ENCODE measurements at regions of chr12 and their contacts with region 1.

Region 1: DNA sequence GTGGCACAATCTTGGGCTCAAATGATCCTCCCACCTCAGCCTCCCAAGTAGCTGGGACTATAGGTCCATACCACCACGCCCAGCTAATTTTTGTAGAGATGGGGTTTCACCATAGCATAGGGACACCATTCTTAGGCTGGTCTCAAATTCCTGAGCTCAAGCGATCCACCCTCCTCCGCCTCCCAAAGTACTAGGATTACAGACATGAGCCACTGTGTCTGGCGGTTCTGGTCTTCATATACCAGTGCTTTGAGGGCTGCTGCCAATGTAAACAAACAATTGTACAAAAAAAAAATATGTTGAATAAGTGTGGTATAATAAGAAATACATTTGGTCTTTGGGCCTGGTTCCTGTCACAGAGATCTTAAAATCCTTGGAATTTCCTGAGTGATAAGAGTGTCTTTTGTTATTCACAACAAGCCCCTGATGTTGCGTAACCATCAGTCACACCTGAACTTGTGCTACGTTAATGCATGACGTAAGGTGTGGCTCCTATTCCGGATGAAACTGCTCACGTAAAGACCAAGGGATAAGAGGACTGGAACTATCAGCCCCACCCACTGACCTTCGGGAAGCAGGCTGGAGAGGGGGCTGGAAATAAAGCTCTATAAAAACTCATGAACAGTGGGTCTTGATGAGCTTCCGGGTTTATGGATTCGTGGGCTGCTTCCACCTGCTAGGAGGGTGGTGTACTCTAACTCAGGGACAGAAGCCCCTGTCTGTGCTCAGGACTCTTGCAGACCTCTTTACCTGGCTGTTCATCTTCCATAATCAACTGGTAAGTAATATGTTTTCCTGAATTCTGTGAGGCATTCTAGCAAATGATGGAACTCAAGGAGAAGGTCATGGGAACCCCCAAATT is 16.5 kb upstream of the RIMKLB start:
- DNase-seq: no peak
- ATAC-seq: no peak

Region 2: DNA sequence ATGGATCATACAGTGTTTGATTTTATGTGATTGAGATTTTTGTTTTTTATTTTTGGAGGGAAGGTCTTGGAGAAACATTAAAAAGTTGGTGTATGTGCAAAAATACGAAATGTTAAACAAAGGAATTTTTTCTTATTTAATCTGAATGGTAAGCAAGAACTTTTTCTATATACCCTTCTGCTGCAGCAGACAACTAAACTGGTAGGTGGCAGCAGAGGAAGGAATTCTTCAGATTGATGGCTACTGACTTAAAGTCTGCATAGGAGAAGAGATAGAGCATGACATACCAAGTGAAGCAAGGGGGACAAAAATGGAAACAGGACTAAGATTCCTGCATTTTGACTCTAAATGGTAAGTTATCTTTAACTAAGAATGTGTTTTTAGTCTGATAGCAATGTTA is 99.1 kb after region 1 on chr12:
- intact Hi-C with region 1: loop called (anchors 5 kb)
- DNase-seq: no peak
- ATAC-seq: peak; percentile 54

Region 3: DNA sequence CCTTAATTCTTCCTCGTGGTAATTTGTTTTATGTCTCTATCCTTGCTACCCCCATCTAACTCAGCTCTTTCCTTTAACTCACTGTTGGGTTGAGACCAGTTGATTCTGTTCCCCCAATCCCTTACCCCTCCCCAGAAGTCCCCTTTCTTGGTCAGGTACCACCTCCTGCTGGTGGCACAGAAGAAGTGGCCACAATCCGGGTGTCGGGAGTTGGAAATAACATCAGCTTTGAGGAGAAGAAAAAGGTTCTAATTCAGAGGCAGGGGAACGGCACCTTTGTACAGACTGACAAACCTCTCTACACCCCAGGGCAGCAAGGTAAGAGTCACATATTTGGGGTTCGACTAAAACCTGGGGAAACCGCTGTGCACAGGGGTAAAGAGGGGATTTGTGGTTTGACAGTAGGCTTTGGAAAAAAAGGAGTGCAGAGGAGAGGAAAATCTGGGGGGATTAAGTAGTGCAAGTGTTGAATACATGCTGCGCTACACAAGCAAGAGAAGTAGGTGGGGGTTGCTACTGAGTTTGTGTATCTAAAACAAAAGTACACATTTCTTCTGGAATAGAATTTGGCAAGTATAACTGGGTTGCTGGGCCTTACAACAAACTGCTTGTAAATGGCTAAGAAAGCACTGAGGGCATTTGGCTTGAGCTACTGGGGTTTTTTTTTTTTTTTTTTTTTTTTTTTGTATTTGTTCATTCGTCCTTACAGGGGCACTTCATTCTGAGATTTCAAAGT is 142.5 kb after region 1 on chr12:
- intact Hi-C with region 1: loop called (anchors 2 kb)
- DNase-seq: no peak
- ATAC-seq: no peak

Region 4: DNA sequence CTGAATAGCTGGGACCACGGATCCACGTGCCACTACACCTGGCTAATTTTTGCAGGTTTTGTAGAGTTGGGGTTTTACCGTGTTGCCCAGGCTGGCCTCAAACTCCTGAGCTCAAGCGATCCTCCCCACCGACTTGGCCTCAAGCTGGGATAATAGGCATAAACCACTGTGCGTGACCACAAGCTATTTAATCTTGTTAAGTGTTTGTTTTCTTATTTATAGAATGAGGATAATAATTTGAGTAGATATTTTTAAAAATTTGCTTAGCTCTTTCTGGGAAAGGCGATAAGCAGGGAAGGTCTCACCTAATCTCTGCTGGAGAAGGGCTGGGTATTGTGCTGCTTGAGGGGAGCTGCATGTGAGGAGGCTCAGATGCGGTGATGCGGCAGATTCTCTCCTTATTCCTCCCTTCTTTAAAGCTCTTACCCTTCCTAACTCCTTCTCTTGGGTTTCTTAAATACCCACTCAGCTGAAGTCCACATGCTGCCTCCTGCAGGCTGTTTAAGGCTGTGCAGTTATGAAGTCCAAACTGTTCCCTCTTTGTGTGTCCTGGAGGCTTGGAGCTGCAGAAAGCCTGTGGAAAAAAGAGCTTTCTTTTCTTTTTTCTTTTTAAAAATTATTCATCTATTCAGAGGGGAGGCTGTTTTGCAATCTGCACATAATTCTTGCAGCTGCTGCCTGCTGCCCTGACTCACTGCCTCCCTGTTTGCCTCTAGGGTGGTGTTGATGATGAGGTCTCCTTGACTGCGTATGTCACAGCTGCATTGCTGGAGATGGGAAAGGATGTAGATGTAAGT is 179.1 kb after region 1 on chr12:
- intact Hi-C with region 1: loop called (anchors 2 kb)
- DNase-seq: no peak
- ATAC-seq: peak; percentile 54

Region 5: DNA sequence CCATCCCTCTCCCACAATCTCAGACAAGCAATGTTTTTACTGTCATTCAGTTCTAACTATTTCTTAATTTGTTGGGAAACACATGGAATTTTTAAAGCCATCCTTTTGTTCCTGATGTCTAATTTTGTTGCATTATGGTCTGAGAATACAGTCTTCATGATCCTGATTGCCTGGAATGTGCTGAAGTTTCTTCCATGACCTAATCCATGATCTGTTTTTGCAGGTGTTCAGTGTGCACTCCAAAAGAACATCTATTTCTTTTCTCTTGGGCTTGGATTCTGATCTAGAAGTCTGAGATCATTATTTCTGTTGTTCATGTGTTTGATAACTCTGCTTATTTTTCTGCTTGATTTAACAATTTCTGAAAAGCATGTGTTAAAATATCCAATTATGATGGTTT is 189.8 kb after region 1 on chr12:
- intact Hi-C with region 1: no loop called
- DNase-seq: no peak
- ATAC-seq: no peak

Region 6: DNA sequence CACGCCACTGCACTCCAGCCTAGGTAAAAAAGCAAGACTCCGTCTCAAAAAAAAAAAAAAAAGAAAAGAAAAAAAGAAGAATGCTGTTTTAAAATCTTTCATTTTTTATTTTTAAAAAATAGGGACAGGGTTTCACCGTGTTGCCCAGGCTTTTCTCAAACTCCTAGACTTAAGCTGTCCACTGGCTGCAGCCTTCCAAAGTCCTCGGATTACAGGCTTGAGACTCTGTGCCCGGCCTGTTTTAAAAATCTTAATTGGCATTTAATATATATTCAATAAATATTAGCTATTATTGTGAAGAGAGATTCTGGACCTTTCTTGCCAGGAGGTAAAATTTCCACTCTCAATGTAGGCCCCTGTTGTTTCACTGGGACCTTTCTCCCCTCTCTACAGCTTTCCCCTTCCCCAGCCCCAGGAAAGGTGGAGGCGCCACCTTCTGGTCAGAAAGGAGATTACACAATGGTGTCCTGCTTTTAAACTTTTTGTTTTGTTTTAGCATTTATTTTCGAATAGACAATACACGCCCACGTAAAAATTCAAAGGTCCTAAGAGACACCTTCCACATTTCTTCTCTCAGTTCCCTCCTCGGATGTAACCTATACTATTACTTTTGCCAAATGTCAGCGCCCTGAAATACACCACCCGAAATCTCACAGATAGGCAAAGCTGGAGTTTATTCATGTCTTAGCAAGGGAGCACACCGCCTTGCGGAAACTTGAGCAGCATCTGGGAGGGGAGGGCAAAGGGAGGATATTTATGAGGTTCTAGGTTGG is 209.2 kb after region 1 on chr12:
- intact Hi-C with region 1: loop called (anchors 5 kb)
- DNase-seq: no peak
- ATAC-seq: peak; percentile 81

Region 7: GRCh38 chr12:9039397-9039977 is 358.2 kb after region 1 on chr12:
- intact Hi-C with region 1: loop called (anchors 5 kb)
- DNase-seq: no peak
- ATAC-seq: no peak

Region 8: DNA sequence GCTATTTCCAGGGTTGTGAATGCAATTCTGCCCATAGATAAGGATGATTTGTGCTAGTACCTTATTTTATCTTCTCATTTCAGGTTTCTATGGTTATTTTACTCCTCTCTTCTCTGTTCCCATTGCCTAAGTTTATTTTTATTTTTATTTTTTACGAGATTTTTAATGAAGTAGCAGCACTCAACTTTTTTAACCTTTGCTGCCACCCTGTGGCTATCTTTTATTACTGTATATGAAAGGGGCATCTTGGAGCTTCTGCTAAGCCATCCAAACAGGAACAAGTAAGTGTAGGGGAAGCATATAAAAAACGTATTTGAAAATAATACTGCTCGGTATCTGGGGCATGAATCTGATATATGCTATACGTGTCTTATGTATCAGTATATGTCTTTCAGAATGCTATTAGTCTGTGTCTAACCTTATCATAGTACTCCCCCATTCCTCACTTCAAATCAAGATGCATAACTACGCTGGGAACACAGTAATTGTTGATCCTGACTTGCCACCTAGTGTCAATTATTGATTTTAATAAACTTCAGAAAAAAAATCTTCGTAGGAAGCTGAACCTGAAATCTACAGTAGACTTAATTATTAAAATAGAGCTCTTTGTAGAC is 368.4 kb after region 1 on chr12:
- intact Hi-C with region 1: loop called (anchors 5 kb)
- DNase-seq: no peak
- ATAC-seq: peak; percentile 44